ENCODE measurements at regions of chr4 and their contacts with region 1.

Region 1: GRCh38 chr4:40976343-40976742 is 226.6 kb downstream of the NSUN7 start:
- DNase-seq: peak in 1 of 2 donors; percentile 34
- ATAC-seq: peak; percentile 65

Region 2: DNA sequence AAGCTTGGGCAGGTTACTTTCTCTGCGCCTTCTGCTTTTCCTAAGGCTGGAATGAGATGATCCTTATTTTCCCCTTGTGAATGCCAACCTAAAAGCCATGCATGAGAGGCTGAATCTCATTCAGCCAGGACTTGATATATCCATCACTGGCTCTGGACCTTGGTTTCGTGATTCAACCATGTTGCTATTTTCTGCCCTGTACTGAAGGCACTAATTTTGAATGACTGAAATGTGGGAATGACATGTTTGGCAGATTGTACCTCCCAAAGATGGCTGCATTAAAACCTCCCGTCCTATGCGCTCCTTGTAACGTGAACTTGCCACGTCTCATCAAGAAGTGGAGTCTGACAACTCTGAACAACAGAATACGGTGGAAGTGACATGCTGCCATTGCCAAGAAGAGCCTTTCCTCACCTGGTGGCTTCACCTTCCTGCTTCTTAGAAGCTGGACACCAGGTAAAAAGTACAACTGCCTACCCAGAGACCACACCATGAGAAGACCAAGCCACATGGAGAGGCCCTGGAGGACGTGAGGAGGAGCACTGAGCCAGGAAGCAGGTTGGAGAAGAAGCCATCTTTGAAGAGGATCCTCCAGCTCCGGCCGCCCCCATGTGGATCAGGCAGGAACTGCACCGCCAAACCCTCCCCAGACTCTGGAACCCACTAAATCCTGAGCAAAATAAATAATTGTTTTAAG is 52.1 kb before region 1 on chr4:
- intact Hi-C with region 1: loop called in 1 of 2 experiments (anchors 10 kb)
- DNase-seq: peak in 1 of 2 donors; percentile 70
- ATAC-seq: peak; percentile 71

Region 3: GRCh38 chr4:40937140-40937725 is 39.1 kb before region 1 on chr4:
- intact Hi-C with region 1: no loop called
- DNase-seq: no peak
- ATAC-seq: no peak

Region 4: GRCh38 chr4:41039317-41039716 is 63.0 kb after region 1 on chr4:
- intact Hi-C with region 1: no loop called
- DNase-seq: no peak
- ATAC-seq: no peak

Region 5: DNA sequence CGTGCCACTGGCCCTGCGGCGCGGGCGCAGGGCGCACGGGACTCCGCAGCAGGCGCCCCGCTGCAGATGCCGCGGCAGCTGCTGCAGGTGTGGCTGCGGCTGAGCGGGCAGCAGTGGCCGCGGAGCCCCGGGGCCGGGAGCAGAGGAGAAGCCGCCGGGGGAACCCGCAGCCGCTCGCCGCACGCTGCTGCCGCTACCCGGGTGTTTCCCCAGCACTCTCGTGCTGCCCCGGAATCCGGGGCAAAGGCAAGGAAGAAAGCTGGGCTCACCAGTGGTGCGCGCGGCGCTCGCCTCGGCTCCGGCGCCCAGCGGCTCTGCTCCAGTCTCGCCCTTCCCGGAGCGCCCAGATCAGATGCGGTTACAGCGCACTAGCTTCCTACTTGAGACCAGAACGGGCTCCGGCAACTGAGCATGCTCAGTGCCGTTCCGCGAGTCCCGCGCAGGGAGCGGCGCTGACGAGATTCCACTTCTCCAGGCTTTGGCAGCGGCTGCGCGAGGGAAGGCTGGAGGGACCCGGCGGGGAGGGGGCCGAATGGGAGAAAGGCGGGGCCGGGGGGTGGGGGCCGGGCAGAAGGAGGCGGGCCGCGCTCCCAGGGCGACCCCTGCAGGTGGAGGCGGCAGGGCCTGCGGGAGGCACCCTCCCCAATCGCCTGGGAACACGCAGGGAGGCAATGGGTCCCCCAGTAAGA is 237.9 kb after region 1 on chr4 and contains the start of gene APBB2:
- intact Hi-C with region 1: loop called in 1 of 2 experiments (anchors 2 kb)
- DNase-seq: peak; percentile 92 to 95
- ATAC-seq: peak; percentile 78
- total RNA-seq, gene APBB2: 28.2 to 30.7 TPM